Activated CD4-positive, alpha-beta T cell treated with anti-CD3 and anti-CD28 coated beads for 36 hours (primary cell): ENCODE measurements at regions of chr11 and their contacts with region 1.

Region 1: GRCh38 chr11:110429731-110430266 is at the start of gene FDX1:
- DNase-seq: peak; percentile 93
- ATAC-seq: peak; percentile 83
- H3K4me3 Mint-ChIP-seq: peak within 1 kb of the TSS; percentile 99
- H3K27ac Mint-ChIP-seq: peak within 1 kb of the TSS; percentile 97
- H3K4me1 Mint-ChIP-seq: peaks cover 41% of the 10 kb centered on the region
- H3K27me3 Mint-ChIP-seq: no peaks in the 10 kb centered on the region
- total RNA-seq, gene FDX1: 8.2 to 13.1 TPM

Region 2: DNA sequence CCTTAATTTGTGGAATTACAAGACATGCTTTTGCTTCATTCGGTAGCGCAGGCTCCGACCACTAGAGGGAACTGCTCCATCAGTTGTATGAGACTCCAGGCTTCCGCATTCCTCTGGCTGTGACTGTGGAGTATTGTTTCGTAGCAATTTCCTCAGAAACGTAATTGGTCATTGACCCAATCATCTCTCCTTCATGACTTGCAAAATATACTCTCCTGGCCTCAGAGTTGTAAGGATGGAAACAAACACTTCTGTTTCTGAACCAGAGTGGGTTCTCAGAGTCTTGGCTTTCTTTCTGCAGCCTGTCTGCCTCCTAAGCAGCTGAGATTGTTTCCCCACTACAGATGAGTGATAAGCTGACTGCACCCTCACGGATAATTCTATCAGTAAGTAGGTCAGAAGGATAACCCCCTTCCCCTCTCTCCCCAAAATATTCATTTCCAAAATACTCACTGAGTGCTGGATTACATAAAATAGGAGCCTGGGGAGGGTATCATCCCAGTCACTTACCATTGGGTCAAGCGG is 483.4 kb before region 1 on chr11:
- CTCF ChIA-PET with region 1: interaction called, 3 read pairs
- POLR2A ChIA-PET with region 1: no interaction called
- intact Hi-C with region 1: loop called (anchors 2 to 5 kb)
- DNase-seq: peak; percentile 82
- ATAC-seq: peak; percentile 98
- H3K4me3 Mint-ChIP-seq: no peak overlapping the region
- H3K27ac Mint-ChIP-seq: no peak overlapping the region
- H3K4me1 Mint-ChIP-seq: peaks cover 4% of the 10 kb centered on the region
- H3K27me3 Mint-ChIP-seq: peaks cover 2% of the 10 kb centered on the region

Region 3: GRCh38 chr11:110173811-110174644 is 255.8 kb before region 1 on chr11:
- CTCF ChIA-PET with region 1: interaction called, 8 read pairs
- POLR2A ChIA-PET with region 1: no interaction called
- intact Hi-C with region 1: loop called in 1 of 2 experiments (anchors 1 kb)
- DNase-seq: peak; percentile 84
- ATAC-seq: peak; percentile 88
- H3K4me3 Mint-ChIP-seq: no peak overlapping the region
- H3K27ac Mint-ChIP-seq: no peak overlapping the region
- H3K4me1 Mint-ChIP-seq: peaks cover 6% of the 10 kb centered on the region
- H3K27me3 Mint-ChIP-seq: peaks cover 16% of the 10 kb centered on the region

Region 4: DNA sequence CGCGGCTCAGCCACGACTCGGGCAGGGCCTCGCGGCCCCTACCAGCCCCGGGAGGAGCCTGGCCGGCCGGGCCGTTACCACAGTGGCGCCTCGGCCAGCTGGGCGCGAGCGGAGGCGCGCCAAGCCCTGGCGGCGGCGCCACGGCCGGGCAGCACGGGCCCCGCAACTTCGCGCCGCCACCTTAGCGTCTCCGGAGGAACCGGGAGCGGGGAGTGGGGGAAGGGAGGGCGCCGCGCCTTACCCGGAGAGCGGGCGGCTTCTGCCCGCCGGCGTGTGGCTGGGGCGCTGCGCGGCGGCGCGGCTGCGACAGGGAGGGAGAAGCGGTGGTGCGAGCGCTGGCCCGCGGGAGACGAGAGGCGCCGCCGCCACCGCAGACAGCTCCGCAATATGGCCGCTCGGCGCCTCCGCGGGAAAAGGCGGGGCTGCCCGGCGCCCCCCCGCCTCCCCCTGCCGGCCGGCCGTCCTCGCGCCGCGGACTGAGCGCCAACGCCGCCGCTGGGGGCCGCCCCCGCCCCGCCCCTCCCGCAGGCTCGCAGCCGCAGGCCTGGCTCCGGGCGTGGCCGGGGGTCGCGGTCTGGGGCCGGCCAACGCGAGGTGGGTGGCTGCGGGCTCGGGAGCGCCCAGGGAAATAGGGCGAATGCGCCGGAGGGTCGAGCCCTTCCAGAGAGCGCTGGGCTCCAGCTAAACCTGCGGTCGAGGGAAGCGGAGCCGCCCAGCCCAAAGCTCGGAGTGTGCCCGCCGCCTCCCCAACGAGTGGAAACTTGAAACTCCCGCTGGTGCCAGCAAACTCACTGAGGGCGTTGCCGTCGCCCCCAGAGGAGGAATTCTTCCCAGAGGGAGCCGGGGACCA is 133.3 kb before region 1 on chr11 and contains the start of gene RDX:
- CTCF ChIA-PET with region 1: interaction called, 4 read pairs
- POLR2A ChIA-PET with region 1: no interaction called
- intact Hi-C with region 1: loop called (anchors 1 kb)
- DNase-seq: peak; percentile 77
- ATAC-seq: peak; percentile 70
- H3K4me3 Mint-ChIP-seq: peak within 1 kb of the TSS; percentile 85
- H3K27ac Mint-ChIP-seq: peak within 1 kb of the TSS; percentile 88
- H3K4me1 Mint-ChIP-seq: peaks cover 39% of the 10 kb centered on the region
- H3K27me3 Mint-ChIP-seq: no peaks in the 10 kb centered on the region
- total RNA-seq, gene RDX: 53.9 to 61.7 TPM

Region 5: DNA sequence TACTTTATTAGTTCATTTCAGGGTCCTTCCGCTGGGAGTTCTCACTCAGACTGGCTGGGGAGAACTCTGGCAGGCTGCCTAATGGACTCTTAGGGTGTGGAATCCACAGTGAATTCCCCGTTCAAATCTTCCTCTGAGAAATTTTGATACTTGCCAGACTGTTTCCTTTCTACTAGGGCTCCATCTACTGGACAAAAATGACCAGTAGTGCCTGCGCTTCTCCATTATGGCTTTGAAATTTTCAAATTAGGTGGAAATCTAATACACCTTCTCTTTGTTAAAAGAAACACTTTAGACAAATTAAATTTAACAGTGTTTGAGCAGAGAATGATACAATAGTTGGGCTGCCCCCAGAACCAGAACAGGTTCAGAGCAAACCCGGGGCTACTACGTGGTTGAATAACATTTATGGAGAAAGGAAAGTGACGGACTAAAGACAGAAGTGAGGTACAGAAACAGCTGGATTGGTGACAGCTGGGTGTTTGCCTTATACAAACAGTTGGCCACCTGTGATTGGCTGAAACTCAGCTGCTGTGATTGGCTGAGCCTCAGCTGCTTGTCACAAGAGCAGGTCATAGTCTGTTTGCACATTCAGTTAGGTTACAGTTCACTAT is 53.0 kb before region 1 on chr11:
- CTCF ChIA-PET with region 1: interaction called, 14 read pairs
- POLR2A ChIA-PET with region 1: no interaction called
- intact Hi-C with region 1: loop called (anchors 1 to 2 kb)
- DNase-seq: peak; percentile 37
- ATAC-seq: peak; percentile 10
- H3K4me3 Mint-ChIP-seq: no peak overlapping the region
- H3K27ac Mint-ChIP-seq: no peak overlapping the region
- H3K4me1 Mint-ChIP-seq: peaks cover 17% of the 10 kb centered on the region
- H3K27me3 Mint-ChIP-seq: peaks cover 3% of the 10 kb centered on the region

Region 6: GRCh38 chr11:110606415-110606814 is 176.6 kb after region 1 on chr11:
- CTCF ChIA-PET with region 1: no interaction called
- POLR2A ChIA-PET with region 1: no interaction called
- intact Hi-C with region 1: no loop called
- DNase-seq: no peak
- ATAC-seq: no peak
- H3K4me3 Mint-ChIP-seq: no peak overlapping the region
- H3K27ac Mint-ChIP-seq: no peak overlapping the region
- H3K4me1 Mint-ChIP-seq: no peaks in the 10 kb centered on the region
- H3K27me3 Mint-ChIP-seq: peaks cover 8% of the 10 kb centered on the region

Region 7: GRCh38 chr11:110728883-110729282 is 299.1 kb after region 1 on chr11:
- CTCF ChIA-PET with region 1: no interaction called
- POLR2A ChIA-PET with region 1: no interaction called
- intact Hi-C with region 1: no loop called
- DNase-seq: no peak
- ATAC-seq: no peak
- H3K4me3 Mint-ChIP-seq: no peak overlapping the region
- H3K27ac Mint-ChIP-seq: no peak overlapping the region
- H3K4me1 Mint-ChIP-seq: no peaks in the 10 kb centered on the region
- H3K27me3 Mint-ChIP-seq: peaks cover 18% of the 10 kb centered on the region

Region 8: GRCh38 chr11:111526501-111526900 is 1096.7 kb after region 1 on chr11:
- CTCF ChIA-PET with region 1: no interaction called
- POLR2A ChIA-PET with region 1: no interaction called
- intact Hi-C with region 1: loop called in 1 of 2 experiments (anchors 10 kb)
- DNase-seq: peak; percentile 65
- ATAC-seq: peak; percentile 66
- H3K4me3 Mint-ChIP-seq: no peak overlapping the region
- H3K27ac Mint-ChIP-seq: peak overlapping the region; percentile 67
- H3K4me1 Mint-ChIP-seq: peaks cover 65% of the 10 kb centered on the region
- H3K27me3 Mint-ChIP-seq: peaks cover 3% of the 10 kb centered on the region